Heart left ventricle (tissue), 16 donors: ENCODE measurements at regions of chr19 and their contacts with region 1.

Region 1: GRCh38 chr19:20039203-20039723 is at the start of gene ZNF682:
- DNase-seq: peak; percentile 94 to 97 (median 96)
- ATAC-seq: peak; percentile 99 to 100 (median 100)
- H3K4me3 ChIP-seq: peak within 1 kb of the TSS; percentile 56 to 97 (median 74)
- H3K27ac ChIP-seq: peak within 1 kb of the TSS in 11 of 12 donors; percentile 59 to 86 (median 68)
- H3K4me1 ChIP-seq: peaks cover 0 to 25% (median 6%) of the 10 kb centered on the region in 12 donors
- H3K27me3 ChIP-seq: no peaks in the 10 kb centered on the region
- CTCF ChIP-seq: no peak
- POLR2A ChIP-seq: peak in 1 of 2 donors; percentile 38
- total RNA-seq, gene ZNF682: 3.3 to 6.8 (median 5.5) TPM

Region 2: DNA sequence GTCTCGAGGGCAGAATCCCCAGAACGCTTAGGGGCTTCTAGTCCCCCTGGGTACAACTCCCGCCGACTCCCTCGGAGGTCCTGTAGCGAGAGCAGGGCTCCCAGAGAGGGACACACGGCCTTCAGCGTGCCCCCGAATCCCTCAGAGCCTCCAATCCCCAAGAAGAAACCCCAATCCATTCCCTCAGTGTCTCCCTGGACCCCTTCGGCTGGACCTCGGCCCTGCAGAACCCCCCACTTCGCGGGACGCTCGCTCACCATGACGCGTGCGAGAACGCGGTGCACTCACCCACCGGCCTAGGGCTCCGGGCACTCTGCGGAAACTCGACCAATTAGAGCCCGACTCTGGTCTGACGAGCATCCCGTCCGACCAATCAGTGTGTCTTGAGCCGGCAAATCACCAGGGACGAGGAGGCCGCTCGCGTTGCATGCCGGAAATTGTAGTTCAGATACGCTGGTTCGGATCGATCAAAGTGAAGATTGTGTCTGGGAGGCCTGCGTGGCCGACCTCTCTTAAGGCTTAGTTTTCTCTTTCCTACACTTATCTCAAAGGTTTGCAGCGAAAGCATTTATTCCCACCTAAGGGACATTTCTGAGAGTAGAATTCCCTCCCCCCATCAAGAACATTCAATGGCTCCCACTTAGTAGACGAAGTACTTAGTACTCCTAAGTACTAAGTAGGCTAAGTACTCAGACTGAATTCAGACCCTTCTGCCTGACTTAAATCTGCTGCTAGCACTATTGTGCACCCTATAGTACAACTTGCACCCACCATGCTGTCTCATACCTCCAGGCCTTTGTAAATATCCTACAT is 900.9 kb before region 1 on chr19 and contains the start of gene TMEM161A:
- intact Hi-C with region 1: no loop called
- DNase-seq: peak; percentile 97 to 99 (median 99)
- ATAC-seq: peak; percentile 97 to 99 (median 98)
- H3K4me3 ChIP-seq: peak within 1 kb of the TSS; percentile 40 to 90 (median 73)
- H3K27ac ChIP-seq: peak within 1 kb of the TSS in 11 of 12 donors; percentile 52 to 90 (median 74)
- H3K4me1 ChIP-seq: peaks cover 0 to 21% (median 10%) of the 10 kb centered on the region in 12 donors
- H3K27me3 ChIP-seq: no peaks in the 10 kb centered on the region
- CTCF ChIP-seq: no peak
- POLR2A ChIP-seq: peak; percentile 26 to 79
- total RNA-seq, gene TMEM161A: 12.3 to 29.7 (median 20.8) TPM

Region 3: DNA sequence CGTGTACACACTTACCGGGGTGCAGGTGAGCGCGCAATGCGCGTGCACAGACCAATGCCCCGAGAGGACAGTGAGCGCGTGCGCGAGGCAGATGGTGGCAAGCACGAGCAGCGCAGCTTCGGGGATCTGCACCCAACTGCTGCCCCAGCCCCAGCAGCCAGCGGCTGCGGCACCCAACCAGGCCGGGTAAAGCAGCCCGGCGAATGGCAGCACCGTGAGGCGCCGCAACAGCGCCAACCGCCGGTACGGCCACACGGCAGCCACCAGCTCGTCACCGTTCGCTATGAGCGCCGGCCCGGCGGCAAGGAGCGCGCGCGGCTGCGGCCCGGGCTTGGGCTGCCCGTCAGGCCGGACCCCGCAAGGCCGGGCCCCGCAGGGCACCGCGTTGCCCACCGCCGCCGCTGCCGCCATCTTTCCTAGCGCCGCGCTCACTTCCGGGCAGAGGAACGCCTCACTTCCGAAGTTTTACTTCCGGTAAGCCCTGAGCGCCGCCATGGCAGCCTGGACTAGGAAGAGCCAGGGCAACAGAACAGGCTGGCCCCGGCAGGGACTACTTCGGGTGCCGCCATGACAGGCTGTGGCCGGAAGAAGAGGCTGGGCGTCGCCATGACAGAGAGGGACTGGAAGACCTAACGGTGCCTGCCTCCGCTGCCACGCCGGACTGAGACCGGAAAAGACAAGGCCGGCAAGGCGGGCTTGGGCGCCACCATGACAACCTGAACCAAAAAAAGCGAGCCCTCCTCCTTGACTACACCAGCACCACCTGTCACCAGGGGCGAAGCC is 375.8 kb before region 1 on chr19 and contains the start of gene ATP13A1:
- intact Hi-C with region 1: loop called in 1 of 10 experiments (anchors 5 kb)
- DNase-seq: peak; percentile 97 to 99 (median 99)
- ATAC-seq: peak; percentile 97 to 98 (median 98)
- H3K4me3 ChIP-seq: peak within 1 kb of the TSS; percentile 78 to 100 (median 96)
- H3K27ac ChIP-seq: peak within 1 kb of the TSS; percentile 83 to 99 (median 95)
- H3K4me1 ChIP-seq: peaks cover 0 to 37% (median 21%) of the 10 kb centered on the region in 12 donors
- H3K27me3 ChIP-seq: no peaks in the 10 kb centered on the region
- CTCF ChIP-seq: peak in 3 of 12 donors; percentile 8 to 34 (median 31)
- POLR2A ChIP-seq: peak in 1 of 2 donors; percentile 63
- total RNA-seq, gene ATP13A1: 15.7 to 65.8 (median 23.1) TPM

Region 4: GRCh38 chr19:20077791-20078463 is 38.7 kb after region 1 on chr19 and contains the start of gene ZNF90:
- intact Hi-C with region 1: loop called in 1 of 10 experiments (anchors 2 kb)
- DNase-seq: peak; percentile 90 to 97 (median 95)
- ATAC-seq: peak; percentile 95 to 99 (median 98)
- H3K4me3 ChIP-seq: peak within 1 kb of the TSS; percentile 13 to 80 (median 60)
- H3K27ac ChIP-seq: peak within 1 kb of the TSS in 5 of 12 donors; percentile 3 to 46 (median 38)
- H3K4me1 ChIP-seq: peaks cover 0 to 20% (median 7%) of the 10 kb centered on the region in 12 donors
- H3K27me3 ChIP-seq: no peaks in the 10 kb centered on the region
- CTCF ChIP-seq: peak in 2 of 12 donors; percentile 7
- POLR2A ChIP-seq: peak in 1 of 2 donors; percentile 17
- total RNA-seq, gene ZNF90: 0.25 to 2.6 (median 0.54) TPM

Region 5: GRCh38 chr19:20237761-20238623 is 198.7 kb after region 1 on chr19:
- intact Hi-C with region 1: loop called in 1 of 10 experiments (anchors 10 kb)
- DNase-seq: peak; percentile 90 to 95 (median 93)
- ATAC-seq: peak; percentile 92 to 97 (median 96)
- H3K4me3 ChIP-seq: peak overlapping the region; percentile 43 to 80 (median 64)
- H3K27ac ChIP-seq: peak overlapping the region in 10 of 12 donors; percentile 1 to 65 (median 49)
- H3K4me1 ChIP-seq: peaks cover 0 to 17% (median 2%) of the 10 kb centered on the region in 12 donors
- H3K27me3 ChIP-seq: no peaks in the 10 kb centered on the region
- CTCF ChIP-seq: peak in 2 of 12 donors; percentile 7 to 17
- POLR2A ChIP-seq: no peak

Region 6: GRCh38 chr19:20423381-20424197 is 384.3 kb after region 1 on chr19:
- intact Hi-C with region 1: loop called in 1 of 10 experiments (anchors 5 kb)
- DNase-seq: peak; percentile 43 to 73 (median 52)
- ATAC-seq: peak in 3 of 4 donors; percentile 62 to 84 (median 67)
- H3K4me3 ChIP-seq: peak overlapping the region; percentile 28 to 75 (median 64)
- H3K27ac ChIP-seq: peak overlapping the region; percentile 58 to 88 (median 80)
- H3K4me1 ChIP-seq: peaks cover 0 to 4% (median 0%) of the 10 kb centered on the region in 12 donors
- H3K27me3 ChIP-seq: no peaks in the 10 kb centered on the region
- CTCF ChIP-seq: no peak
- POLR2A ChIP-seq: no peak